SK-N-SH (cell line): ENCODE measurements at regions of chr11 and their contacts with region 1.

Region 1: DNA sequence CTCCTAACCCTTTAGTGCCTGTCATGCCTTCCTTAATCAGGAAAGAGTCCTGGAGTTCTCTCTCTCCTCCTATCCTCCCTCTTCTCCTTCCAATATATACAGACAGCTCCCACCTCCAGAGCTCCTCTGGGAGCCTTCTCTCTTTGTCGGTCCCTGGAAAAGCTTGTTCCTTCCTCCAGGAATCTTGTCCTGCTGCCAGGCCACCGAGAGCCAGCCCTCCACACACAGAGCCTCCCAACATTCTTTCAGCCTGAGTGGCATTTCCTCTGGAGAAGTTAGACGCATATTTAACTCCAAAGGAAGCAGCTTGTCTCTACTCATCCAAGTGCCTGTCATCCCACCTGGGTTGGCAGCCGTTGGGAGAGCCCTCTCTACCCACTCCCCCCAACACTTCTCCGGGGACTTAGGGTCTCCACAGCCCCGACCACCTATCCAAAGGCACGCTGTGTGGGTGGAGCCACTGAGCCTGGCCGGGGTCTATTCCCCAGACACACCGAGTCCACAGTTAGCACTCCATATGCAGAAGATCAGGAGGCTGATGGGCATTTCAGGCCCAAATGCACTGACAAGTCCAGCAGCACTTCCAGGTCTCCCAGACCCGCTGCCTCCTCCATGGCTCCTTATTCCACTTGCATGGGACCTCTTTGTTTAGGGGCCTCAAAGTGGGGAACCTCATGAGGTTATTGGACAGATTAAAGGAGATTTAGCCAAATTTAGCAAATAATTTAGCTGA is 31.1 kb downstream of the DKK3 start:
- DNase-seq: no peak
- H3K4me3 ChIP-seq: no peak overlapping the region
- H3K27ac ChIP-seq: peak overlapping the region; percentile 99 to 100
- H3K4me1 ChIP-seq: peaks cover 83 to 93% of the 10 kb centered on the region in 2 experiments
- H3K27me3 ChIP-seq: no peaks in the 10 kb centered on the region
- CTCF ChIP-seq: no peak
- EP300 ChIP-seq: peak; percentile 64 to 97
- RAD21 ChIP-seq: no peak

Region 2: GRCh38 chr11:11876458-11876857 is 100.9 kb before region 1 on chr11:
- CTCF ChIA-PET with region 1: no interaction called
- POLR2A ChIA-PET with region 1: no interaction called
- DNase-seq: no peak
- H3K4me3 ChIP-seq: no peak overlapping the region
- H3K27ac ChIP-seq: no peak overlapping the region
- H3K4me1 ChIP-seq: peaks cover 0 to 7% of the 10 kb centered on the region in 2 experiments; a peak in 2 of 4 replicates
- H3K27me3 ChIP-seq: no peaks in the 10 kb centered on the region
- CTCF ChIP-seq: no peak; the same call in 1 of the 2 replicates
- EP300 ChIP-seq: no peak
- RAD21 ChIP-seq: peak; percentile 13; the same call in 1 of the 2 replicates

Region 3: DNA sequence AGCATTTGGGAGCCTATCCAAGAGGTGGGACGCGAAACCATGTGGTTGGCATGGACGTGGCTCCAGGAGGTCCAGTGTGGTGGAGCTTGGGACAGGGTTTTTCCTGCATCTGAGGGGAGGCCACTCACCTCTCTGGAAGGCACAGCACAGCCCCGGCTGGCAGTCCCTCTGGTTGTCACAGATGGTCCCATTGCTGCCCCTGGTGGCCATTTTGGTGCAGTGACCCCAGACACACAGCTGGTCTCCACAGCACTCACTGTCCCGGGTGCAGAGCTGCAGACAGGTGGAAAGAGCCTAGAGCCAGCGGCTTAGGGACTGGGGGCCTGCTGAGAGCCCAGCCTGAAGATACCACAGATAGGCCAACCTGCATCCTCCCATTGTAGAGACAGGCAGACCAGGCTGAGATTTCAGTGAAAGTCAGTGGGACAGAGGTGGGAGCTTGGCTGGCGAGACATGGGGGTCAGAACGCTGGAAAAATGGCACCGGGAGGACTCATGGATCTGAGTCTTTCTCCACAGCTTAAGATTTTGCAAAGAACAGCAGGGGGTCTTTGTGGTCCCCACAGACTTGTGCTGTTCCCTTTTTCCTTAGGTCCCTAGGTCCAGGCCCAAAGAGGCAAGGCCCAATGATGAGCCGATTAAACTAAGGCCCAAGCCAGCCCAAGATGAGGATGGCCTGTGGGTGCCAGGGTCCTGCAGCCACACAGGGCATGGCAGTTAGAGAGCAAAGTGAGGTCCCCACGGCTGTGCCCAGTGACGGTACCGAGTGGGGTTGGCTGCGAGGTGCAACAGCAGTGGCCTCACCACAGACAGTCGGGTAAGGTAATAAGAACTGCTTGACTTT is 10.3 kb before region 1 on chr11:
- CTCF ChIA-PET with region 1: interaction called, 39 read pairs
- POLR2A ChIA-PET with region 1: interaction called, 21 read pairs
- DNase-seq: peak; percentile 77
- H3K4me3 ChIP-seq: no peak overlapping the region; a peak in 1 of 4 replicates
- H3K27ac ChIP-seq: peak overlapping the region; percentile 85 to 100; a peak in 3 of 4 replicates
- H3K4me1 ChIP-seq: peaks cover 22 to 80% of the 10 kb centered on the region in 2 experiments
- H3K27me3 ChIP-seq: no peaks in the 10 kb centered on the region
- CTCF ChIP-seq: peak; percentile 76
- EP300 ChIP-seq: no peak
- RAD21 ChIP-seq: peak; percentile 64

Region 4: GRCh38 chr11:11998091-11998781 is 20.9 kb after region 1 on chr11:
- CTCF ChIA-PET with region 1: interaction called, 7 read pairs
- POLR2A ChIA-PET with region 1: interaction called, 10 read pairs
- DNase-seq: no peak
- H3K4me3 ChIP-seq: peak overlapping the region; percentile 21 to 40; a peak in 2 of 4 replicates
- H3K27ac ChIP-seq: peak overlapping the region; percentile 85 to 99
- H3K4me1 ChIP-seq: peaks cover 26 to 50% of the 10 kb centered on the region in 2 experiments
- H3K27me3 ChIP-seq: no peaks in the 10 kb centered on the region
- CTCF ChIP-seq: no peak
- EP300 ChIP-seq: peak in 1 of 2 experiments; percentile 65; a peak in 1 of 4 replicates
- RAD21 ChIP-seq: no peak

Region 5: GRCh38 chr11:12008790-12009616 is 31.6 kb after region 1 on chr11:
- CTCF ChIA-PET with region 1: interaction called, 5 read pairs
- POLR2A ChIA-PET with region 1: interaction called, 18 read pairs
- DNase-seq: peak; percentile 99
- H3K4me3 ChIP-seq: peak overlapping the region; percentile 92 to 94
- H3K27ac ChIP-seq: peak overlapping the region; percentile 77 to 85
- H3K4me1 ChIP-seq: peaks cover 29 to 33% of the 10 kb centered on the region in 2 experiments; a peak in 3 of 4 replicates
- H3K27me3 ChIP-seq: no peaks in the 10 kb centered on the region
- CTCF ChIP-seq: no peak
- EP300 ChIP-seq: no peak
- RAD21 ChIP-seq: no peak

Region 6: GRCh38 chr11:12087075-12088004 is 110.0 kb after region 1 on chr11:
- CTCF ChIA-PET with region 1: no interaction called
- POLR2A ChIA-PET with region 1: no interaction called
- DNase-seq: no peak
- H3K4me3 ChIP-seq: peak overlapping the region; percentile 34 to 63; a peak in 3 of 4 replicates
- H3K27ac ChIP-seq: peak overlapping the region; percentile 90 to 100
- H3K4me1 ChIP-seq: peaks cover 6 to 52% of the 10 kb centered on the region in 2 experiments; a peak in 3 of 4 replicates
- H3K27me3 ChIP-seq: no peaks in the 10 kb centered on the region
- CTCF ChIP-seq: peak; percentile 38
- EP300 ChIP-seq: no peak
- RAD21 ChIP-seq: no peak